CD4-positive, alpha-beta T cell (primary cell): ENCODE measurements at regions of chr3 and their contacts with region 1.

Region 1: DNA sequence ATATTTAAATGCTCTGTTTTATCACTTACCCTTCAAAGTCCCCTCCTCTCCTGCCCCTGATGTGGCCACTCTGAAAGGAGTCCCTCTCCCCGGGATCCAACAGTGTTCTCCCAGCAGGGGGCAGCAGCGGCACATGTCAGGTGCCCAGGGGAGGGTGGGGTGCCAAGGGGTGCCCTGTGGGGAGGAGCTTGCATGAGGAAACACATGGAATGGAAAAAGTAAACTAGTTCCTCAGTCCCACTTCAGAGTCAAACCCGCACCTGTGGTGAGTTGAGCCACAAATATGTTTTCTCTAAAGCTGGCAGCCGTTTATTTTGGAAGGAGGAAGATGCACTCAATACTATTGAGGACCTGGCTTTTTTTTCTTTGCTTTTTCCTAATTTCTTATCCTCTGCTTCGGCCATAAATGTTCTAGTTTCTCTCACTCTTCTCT is 30.1 kb upstream of the NRROS start:
- DNase-seq: peak; percentile 89 to 98 (median 94)
- ATAC-seq: peak; percentile 74
- H3K4me3 ChIP-seq: peak overlapping the region; percentile 3
- H3K4me3 Mint-ChIP-seq: peak overlapping the region; percentile 69
- H3K27ac ChIP-seq: peak overlapping the region in 1 of 2 donors; percentile 50
- H3K27ac Mint-ChIP-seq: peak overlapping the region; percentile 74
- H3K4me1 ChIP-seq: peaks cover 42% of the 10 kb centered on the region
- H3K4me1 Mint-ChIP-seq: peaks cover 46% of the 10 kb centered on the region
- H3K27me3 ChIP-seq: no peaks in the 10 kb centered on the region
- H3K27me3 Mint-ChIP-seq: no peaks in the 10 kb centered on the region
- CTCF ChIP-seq: peak; percentile 99

Region 2: DNA sequence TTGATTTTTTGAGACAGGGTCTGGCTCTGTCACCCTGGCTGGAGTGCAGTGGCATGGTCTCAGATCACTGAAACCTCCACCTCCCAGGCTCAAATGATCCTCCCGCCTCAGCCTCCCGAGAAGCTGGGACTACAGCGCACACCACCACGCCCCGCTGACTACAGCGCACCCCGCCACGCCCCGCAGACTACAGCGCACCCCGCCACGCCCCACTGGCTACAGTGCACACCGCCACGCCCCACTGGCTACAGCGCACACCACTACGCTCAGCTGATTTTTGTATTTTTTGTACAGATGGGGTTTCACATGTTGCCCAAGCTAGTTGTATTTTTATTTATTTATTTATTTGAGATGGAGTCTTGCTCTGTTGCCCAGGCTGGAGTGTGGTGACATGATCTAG is 357.4 kb before region 1 on chr3:
- CTCF ChIA-PET with region 1: no interaction called
- POLR2A ChIA-PET with region 1: no interaction called
- intact Hi-C with region 1: loop called in 1 of 2 experiments (anchors 10 kb)
- DNase-seq: peak in 1 of 14 experiments; percentile 17
- ATAC-seq: no peak
- H3K4me3 ChIP-seq: no peak overlapping the region
- H3K4me3 Mint-ChIP-seq: no peak overlapping the region
- H3K27ac ChIP-seq: no peak overlapping the region
- H3K27ac Mint-ChIP-seq: no peak overlapping the region
- H3K4me1 ChIP-seq: peaks cover 7% of the 10 kb centered on the region
- H3K4me1 Mint-ChIP-seq: peaks cover 5% of the 10 kb centered on the region
- H3K27me3 ChIP-seq: no peaks in the 10 kb centered on the region
- H3K27me3 Mint-ChIP-seq: no peaks in the 10 kb centered on the region
- CTCF ChIP-seq: no peak

Region 3: DNA sequence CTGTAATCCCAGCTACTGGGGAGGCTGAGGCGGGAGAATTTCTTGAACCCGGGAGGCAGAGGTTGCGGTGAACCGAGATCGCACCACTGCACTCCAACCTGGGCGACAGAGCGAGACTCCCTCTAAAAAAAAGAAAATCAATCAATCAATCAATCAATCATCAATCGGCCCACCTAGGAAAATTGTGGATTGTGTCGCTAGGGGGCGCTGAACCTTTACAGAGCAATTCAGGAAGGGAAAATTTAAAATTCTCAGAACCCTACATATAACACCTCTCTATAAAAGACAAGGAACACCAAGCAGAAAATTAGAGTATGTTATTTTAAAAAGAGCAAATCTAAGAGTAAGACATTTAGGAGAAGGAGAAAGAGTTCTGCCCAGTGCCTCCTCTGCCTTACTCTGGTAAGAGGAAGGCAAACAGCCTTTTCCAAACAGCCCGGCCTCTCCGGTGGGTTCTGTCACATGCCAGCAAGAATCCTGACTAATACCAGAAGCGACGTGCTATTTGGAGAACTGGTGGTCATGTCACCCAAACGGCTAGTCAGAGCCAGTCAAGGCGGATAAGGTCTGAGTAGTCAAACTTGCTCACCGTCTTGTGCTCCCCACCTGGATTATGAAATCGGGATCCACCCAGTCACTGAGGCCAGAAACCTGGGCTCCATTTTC is 71.9 kb before region 1 on chr3:
- CTCF ChIA-PET with region 1: no interaction called
- POLR2A ChIA-PET with region 1: no interaction called
- intact Hi-C with region 1: loop called in 1 of 2 experiments (anchors 5 kb)
- DNase-seq: peak; percentile 43 to 83 (median 63)
- ATAC-seq: no peak
- H3K4me3 ChIP-seq: no peak overlapping the region
- H3K4me3 Mint-ChIP-seq: no peak overlapping the region
- H3K27ac ChIP-seq: no peak overlapping the region
- H3K27ac Mint-ChIP-seq: no peak overlapping the region
- H3K4me1 ChIP-seq: peaks cover 3% of the 10 kb centered on the region
- H3K4me1 Mint-ChIP-seq: no peaks in the 10 kb centered on the region
- H3K27me3 ChIP-seq: no peaks in the 10 kb centered on the region
- H3K27me3 Mint-ChIP-seq: no peaks in the 10 kb centered on the region
- CTCF ChIP-seq: peak; percentile 91

Region 4: DNA sequence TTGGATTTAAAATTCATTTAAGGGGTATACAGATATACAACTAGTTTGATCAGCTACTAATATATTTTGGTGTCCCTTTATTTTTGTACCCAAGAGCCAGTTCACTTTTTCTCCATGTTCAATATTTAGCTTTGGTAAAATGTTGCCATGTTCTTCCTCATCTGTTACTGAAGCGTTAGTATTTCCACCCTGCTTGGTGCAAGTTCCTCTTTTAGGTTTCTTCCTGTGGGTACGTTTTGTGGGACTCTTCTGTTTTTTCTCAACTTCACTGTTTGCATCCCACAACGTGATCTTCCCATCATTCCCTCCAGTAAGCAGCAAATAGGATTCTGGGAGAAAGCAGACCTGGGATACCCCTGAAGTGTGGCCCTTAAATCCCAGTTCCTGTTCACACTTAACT is 55.2 kb before region 1 on chr3:
- CTCF ChIA-PET with region 1: no interaction called
- POLR2A ChIA-PET with region 1: no interaction called
- intact Hi-C with region 1: no loop called
- DNase-seq: no peak
- ATAC-seq: no peak
- H3K4me3 ChIP-seq: no peak overlapping the region
- H3K4me3 Mint-ChIP-seq: no peak overlapping the region
- H3K27ac ChIP-seq: no peak overlapping the region
- H3K27ac Mint-ChIP-seq: peak overlapping the region; percentile 51
- H3K4me1 ChIP-seq: no peaks in the 10 kb centered on the region
- H3K4me1 Mint-ChIP-seq: peaks cover 9% of the 10 kb centered on the region
- H3K27me3 ChIP-seq: no peaks in the 10 kb centered on the region
- H3K27me3 Mint-ChIP-seq: no peaks in the 10 kb centered on the region
- CTCF ChIP-seq: no peak

Region 5: DNA sequence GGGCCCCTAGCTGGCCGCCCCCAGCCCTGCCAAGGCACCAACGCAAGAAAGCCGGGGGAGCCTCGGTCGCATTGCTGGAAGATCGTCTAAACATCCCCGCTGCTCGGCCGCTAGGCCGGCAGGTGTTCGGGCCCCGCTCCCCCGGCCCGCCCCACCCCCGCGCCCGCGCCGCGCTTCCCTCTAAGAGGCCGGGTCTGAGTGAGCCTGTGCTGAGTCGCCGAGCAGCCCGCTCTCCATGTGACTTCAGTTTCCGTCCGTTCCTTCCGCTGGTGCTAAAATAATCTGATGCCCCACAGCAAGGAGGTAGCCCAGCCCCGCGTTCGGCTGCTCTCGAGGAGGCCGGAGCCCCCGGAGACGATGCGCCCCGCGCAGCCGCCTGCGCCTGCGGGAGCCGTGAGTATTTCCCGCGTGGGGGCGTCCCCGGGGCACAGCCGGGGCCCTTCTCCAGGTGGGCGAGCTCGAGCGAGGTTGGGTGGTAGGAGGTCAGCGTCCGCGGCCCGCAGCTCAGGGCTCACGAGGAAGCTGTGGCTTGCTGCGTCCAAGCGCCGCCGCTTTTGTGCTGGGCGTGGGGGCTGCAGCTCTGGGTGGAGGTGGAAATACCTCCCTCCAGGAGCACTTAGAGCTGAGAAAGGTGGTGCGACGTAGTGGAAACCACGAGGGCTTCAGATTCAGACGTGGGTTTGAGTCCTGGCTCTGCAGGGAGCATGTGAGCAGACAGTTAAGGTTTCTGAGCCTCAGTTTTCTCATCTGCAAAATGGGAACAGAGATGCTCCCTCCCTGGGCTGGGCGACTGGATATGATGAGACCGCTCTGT is 30.3 kb after region 1 on chr3 and contains the start of gene NRROS:
- CTCF ChIA-PET with region 1: interaction called, 25 read pairs
- POLR2A ChIA-PET with region 1: interaction called, 29 read pairs
- intact Hi-C with region 1: no loop called
- DNase-seq: peak; percentile 29 to 79 (median 54)
- ATAC-seq: peak; percentile 39
- H3K4me3 ChIP-seq: peak within 1 kb of the TSS; percentile 94
- H3K4me3 Mint-ChIP-seq: peak within 1 kb of the TSS; percentile 86
- H3K27ac ChIP-seq: peak within 1 kb of the TSS; percentile 60 to 81
- H3K27ac Mint-ChIP-seq: peak within 1 kb of the TSS; percentile 91
- H3K4me1 ChIP-seq: peaks cover 73% of the 10 kb centered on the region
- H3K4me1 Mint-ChIP-seq: peaks cover 77% of the 10 kb centered on the region
- H3K27me3 ChIP-seq: no peaks in the 10 kb centered on the region
- H3K27me3 Mint-ChIP-seq: no peaks in the 10 kb centered on the region
- CTCF ChIP-seq: no peak
- total RNA-seq, gene NRROS: 7.4 to 8.4 TPM

Region 6: DNA sequence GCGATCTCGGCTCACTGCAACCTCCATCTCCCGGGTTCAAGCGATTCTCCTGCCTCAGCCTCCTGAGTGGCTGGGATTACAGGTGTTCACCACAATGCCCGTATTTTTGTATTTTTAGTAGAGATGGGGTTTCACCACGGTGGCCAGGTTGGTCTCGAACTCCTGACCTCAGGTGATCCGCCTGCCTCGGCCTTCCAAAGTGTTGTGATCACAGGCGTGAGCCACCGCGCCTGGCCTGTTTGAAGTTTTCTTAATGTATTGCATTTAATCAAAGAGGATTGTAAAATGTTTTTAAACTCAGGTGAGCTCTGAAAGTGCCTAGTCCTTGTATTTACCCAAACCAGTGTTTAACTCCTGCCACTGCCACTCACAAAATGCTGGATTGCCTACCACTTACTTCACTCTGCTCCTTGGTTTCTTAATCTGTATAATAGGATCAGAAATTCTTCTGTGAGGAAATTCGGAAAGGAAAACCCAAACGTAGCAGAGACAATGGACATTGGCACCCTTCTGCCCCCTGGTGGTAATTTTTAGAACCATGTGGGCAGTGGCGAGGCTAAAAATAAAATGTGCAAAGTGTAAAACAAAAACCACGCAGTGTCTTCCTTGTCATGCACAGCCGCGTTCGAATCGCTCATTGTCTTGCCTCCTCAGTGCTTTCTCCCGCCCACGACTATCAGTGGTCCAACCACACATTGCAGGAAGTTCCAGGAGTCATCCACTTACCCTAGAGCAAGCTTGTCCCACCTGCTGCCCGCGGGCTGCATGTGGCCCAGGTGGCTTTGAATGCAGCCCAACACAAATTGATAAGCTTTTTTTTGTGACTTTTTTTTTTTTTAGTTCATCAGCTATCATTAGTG is 75.4 kb after region 1 on chr3:
- CTCF ChIA-PET with region 1: interaction called, 67 read pairs
- POLR2A ChIA-PET with region 1: interaction called, 15 read pairs
- intact Hi-C with region 1: loop called (anchors 1 kb)
- DNase-seq: peak; percentile 44 to 85 (median 54)
- ATAC-seq: peak; percentile 91
- H3K4me3 ChIP-seq: peak overlapping the region; percentile 15
- H3K4me3 Mint-ChIP-seq: peak overlapping the region; percentile 74
- H3K27ac ChIP-seq: no peak overlapping the region
- H3K27ac Mint-ChIP-seq: peak overlapping the region; percentile 60
- H3K4me1 ChIP-seq: peaks cover 11% of the 10 kb centered on the region
- H3K4me1 Mint-ChIP-seq: peaks cover 14% of the 10 kb centered on the region
- H3K27me3 ChIP-seq: no peaks in the 10 kb centered on the region
- H3K27me3 Mint-ChIP-seq: no peaks in the 10 kb centered on the region
- CTCF ChIP-seq: peak; percentile 90

Region 7: DNA sequence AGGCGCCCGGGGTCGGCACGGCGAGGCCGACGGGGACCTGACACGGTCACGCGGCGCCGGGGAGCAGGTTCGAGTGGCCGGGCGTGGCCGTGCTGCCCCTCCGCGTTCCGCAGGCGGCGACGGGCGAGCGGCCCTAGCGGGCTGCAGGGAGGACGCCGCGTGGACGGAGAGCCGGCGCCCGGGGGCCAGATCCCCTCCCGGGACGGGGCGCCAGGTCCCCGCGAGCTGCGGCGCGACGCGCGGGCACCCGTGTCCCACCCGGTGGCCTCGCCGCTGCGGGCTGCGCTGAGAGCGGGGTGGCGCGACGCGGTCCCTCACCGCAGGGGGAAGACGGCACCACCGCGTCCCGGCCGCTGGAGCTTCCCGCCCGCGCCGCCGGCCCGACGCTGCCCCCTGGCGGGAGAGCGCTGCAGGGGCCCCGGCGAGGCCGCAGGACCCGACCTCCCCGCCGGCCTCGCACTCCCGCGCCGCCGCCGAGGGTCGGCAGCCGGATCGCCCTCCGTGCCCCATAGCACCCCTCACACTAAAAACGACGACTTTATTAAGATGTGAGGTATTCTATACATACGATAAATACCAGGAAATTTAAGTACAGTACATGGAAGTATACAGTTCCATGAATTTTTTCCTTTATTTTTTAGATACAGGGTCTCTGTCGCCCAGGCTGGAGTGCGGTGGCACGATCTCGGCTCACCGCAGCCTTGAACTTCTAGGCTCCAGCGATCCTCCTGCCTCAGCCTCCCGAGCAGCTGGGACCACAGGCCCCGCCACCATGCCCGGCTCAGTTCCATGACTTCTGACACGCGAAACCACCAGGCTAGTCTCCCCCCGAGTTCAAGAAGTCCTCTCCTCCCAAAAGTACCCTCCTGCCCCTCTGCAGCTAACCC is 360.5 kb after region 1 on chr3:
- CTCF ChIA-PET with region 1: no interaction called
- POLR2A ChIA-PET with region 1: no interaction called
- intact Hi-C with region 1: loop called in 1 of 2 experiments (anchors 2 kb)
- DNase-seq: peak in 13 of 14 experiments; percentile 37 to 89 (median 56)
- ATAC-seq: peak; percentile 70
- H3K4me3 ChIP-seq: peak overlapping the region; percentile 52
- H3K4me3 Mint-ChIP-seq: peak overlapping the region; percentile 85
- H3K27ac ChIP-seq: no peak overlapping the region
- H3K27ac Mint-ChIP-seq: peak overlapping the region; percentile 51
- H3K4me1 ChIP-seq: peaks cover 11% of the 10 kb centered on the region
- H3K4me1 Mint-ChIP-seq: peaks cover 11% of the 10 kb centered on the region
- H3K27me3 ChIP-seq: peaks cover 0 to 6% of the 10 kb centered on the region in 2 experiments
- H3K27me3 Mint-ChIP-seq: peaks cover 19% of the 10 kb centered on the region
- CTCF ChIP-seq: peak; percentile 61